Common myeloid progenitor, CD34-positive (primary cell): ENCODE measurements at regions of chr16 and their contacts with region 1.

Region 1: GRCh38 chr16:86519649-86520316 is 9.5 kb downstream of the FOXF1 start:
- DNase-seq: peak; percentile 56 to 70 (median 67)
- H3K4me3 ChIP-seq: no peak overlapping the region
- H3K27ac ChIP-seq: no peak overlapping the region
- H3K4me1 ChIP-seq: peaks cover 0 to 9% (median 5%) of the 10 kb centered on the region in 4 experiments
- H3K27me3 ChIP-seq: peaks cover 2 to 94% (median 44%) of the 10 kb centered on the region in 5 experiments

Region 2: DNA sequence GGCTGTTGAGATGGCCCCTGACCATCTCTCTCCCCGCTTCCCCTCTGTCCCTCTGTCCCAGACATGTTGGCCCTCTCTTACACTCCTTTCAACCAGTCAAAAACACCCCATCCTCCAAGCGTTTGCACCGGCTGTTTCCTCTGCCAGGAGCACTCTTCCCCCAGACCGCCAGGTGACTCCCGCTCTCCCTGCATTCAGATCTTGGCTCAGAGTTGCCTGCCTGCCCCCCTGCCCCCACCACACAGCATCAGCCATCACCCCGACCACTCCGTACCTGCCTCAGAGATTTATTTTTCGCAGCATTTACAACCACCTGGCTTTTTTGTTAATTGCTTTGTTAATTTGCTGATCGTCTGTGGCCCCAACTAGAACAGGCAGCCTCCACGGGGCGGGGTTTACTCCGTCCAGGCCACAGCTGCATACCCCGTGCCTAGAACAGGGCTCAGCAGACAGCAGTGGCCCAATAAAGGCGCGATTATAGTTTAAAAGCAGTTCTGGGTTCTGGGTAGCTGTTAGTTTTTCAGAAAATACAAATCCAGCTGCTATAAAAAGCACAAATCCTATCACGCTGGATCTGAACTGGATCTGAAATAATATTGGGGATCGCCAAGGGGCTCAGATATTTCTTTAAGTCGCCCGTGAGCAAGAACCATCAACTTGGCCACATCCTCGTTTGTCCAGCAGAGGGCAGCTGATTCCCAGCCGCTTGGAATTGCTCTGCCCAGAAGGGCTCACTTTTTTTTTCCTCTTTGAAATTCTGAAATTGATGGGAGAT is 447.3 kb before region 1 on chr16:
- CTCF ChIA-PET with region 1: interaction called, 36 read pairs
- POLR2A ChIA-PET with region 1: no interaction called
- DNase-seq: peak; percentile 66 to 76 (median 68)
- H3K4me3 ChIP-seq: no peak overlapping the region
- H3K27ac ChIP-seq: no peak overlapping the region
- H3K4me1 ChIP-seq: peaks cover 0 to 8% (median 0%) of the 10 kb centered on the region in 4 experiments
- H3K27me3 ChIP-seq: peaks cover 0 to 64% (median 16%) of the 10 kb centered on the region in 5 experiments

Region 3: DNA sequence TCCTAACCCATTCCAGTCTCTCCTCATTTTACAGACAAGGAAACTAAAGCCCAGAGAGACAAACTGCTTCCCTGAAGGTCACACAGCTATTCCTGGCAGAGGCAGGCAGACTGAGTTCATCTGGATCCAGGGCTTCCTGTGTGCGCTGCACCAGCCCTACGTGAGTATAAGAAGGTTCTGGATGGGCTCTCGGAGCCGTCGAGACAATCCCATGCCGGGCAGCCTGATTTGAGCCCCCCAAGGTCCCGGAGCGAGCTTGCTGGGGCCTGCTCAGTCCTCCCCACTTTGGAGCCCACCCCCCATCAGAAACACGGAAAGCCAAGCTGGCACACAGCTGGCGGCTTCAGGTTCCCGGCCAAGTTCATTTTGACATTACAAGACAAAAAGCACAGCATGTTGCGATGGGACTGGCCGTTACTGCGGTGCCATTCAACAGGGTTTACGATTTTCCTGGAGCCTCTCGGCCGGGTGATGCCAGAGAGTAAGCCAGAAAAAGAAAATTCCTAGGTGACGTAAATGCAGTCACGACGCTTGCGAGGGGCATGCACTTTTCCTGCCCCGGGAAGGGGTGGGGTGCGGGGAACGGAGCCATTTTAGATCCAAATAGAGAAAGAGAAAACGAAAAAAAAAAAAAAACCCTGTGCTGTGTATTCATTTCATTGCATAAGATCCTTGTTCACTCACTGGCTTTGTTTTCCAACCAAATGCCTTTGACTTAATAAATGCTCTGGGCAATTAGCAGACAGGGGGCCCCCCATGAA is 176.6 kb before region 1 on chr16:
- CTCF ChIA-PET with region 1: interaction called, 59 read pairs
- POLR2A ChIA-PET with region 1: no interaction called
- DNase-seq: no peak
- H3K4me3 ChIP-seq: no peak overlapping the region
- H3K27ac ChIP-seq: no peak overlapping the region
- H3K4me1 ChIP-seq: peaks cover 0 to 3% (median 0%) of the 10 kb centered on the region in 4 experiments
- H3K27me3 ChIP-seq: peaks cover 4 to 80% (median 41%) of the 10 kb centered on the region in 5 experiments

Region 4: GRCh38 chr16:86384980-86385379 is 134.8 kb before region 1 on chr16:
- CTCF ChIA-PET with region 1: no interaction called
- POLR2A ChIA-PET with region 1: no interaction called
- DNase-seq: no peak
- H3K4me3 ChIP-seq: no peak overlapping the region
- H3K27ac ChIP-seq: no peak overlapping the region
- H3K4me1 ChIP-seq: no peaks in the 10 kb centered on the region
- H3K27me3 ChIP-seq: peaks cover 2 to 71% (median 5%) of the 10 kb centered on the region in 5 experiments

Region 5: GRCh38 chr16:86414991-86415740 is 104.6 kb before region 1 on chr16:
- CTCF ChIA-PET with region 1: no interaction called
- POLR2A ChIA-PET with region 1: interaction called, 10 read pairs
- DNase-seq: peak; percentile 41 to 70 (median 59)
- H3K4me3 ChIP-seq: peak overlapping the region in 1 of 7 experiments; percentile 8
- H3K27ac ChIP-seq: no peak overlapping the region
- H3K4me1 ChIP-seq: peaks cover 0 to 11% (median 2%) of the 10 kb centered on the region in 4 experiments
- H3K27me3 ChIP-seq: peaks cover 0 to 6% (median 3%) of the 10 kb centered on the region in 5 experiments

Region 6: DNA sequence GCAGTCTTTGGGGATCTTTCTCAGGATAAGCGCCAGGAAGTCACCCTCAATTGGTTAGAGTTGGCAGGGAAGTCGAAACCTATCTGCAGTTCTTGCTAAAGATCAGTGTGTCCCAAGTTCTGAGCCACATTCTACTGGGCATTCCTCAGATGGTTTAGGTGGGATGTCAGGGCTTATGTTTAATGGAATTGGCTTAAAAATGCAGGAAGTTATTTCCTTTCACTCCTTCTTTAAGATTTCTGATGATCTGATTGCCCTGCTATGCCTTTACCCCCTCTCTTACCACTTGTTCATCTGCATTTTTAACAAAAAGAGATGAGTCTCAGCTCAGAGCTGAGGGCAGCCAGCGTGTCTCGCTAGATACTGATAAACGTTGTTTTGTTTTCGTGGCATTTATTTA is 89.3 kb after region 1 on chr16:
- CTCF ChIA-PET with region 1: no interaction called
- POLR2A ChIA-PET with region 1: no interaction called
- DNase-seq: no peak
- H3K4me3 ChIP-seq: no peak overlapping the region
- H3K27ac ChIP-seq: no peak overlapping the region
- H3K4me1 ChIP-seq: peaks cover 0 to 5% (median 2%) of the 10 kb centered on the region in 4 experiments
- H3K27me3 ChIP-seq: peaks cover 0 to 10% (median 0%) of the 10 kb centered on the region in 5 experiments